A549 (cell line): ENCODE measurements at regions of chr6 and their contacts with region 1.

Region 1: GRCh38 chr6:3748208-3749066 is 3.1 kb downstream of the PXDC1 start:
- DNase-seq: peak; percentile 75 to 86
- ATAC-seq: peak; percentile 74 to 83
- H3K4me3 ChIP-seq: no peak overlapping the region
- H3K27ac ChIP-seq: peak overlapping the region; percentile 41 to 53; a peak in 2 of 6 replicates
- H3K4me1 ChIP-seq: peaks cover 39% of the 10 kb centered on the region
- CTCF ChIP-seq: peak; percentile 69
- EP300 ChIP-seq: no peak
- POLR2A ChIP-seq: no peak
- RAD21 ChIP-seq: peak; percentile 66 to 72

Region 2: GRCh38 chr6:3721810-3722626 is 26.4 kb before region 1 on chr6:
- CTCF ChIA-PET with region 1: no interaction called
- POLR2A ChIA-PET with region 1: no interaction called
- DNase-seq: no peak
- ATAC-seq: no peak
- H3K4me3 ChIP-seq: no peak overlapping the region
- H3K27ac ChIP-seq: no peak overlapping the region
- H3K4me1 ChIP-seq: no peaks in the 10 kb centered on the region
- CTCF ChIP-seq: no peak
- EP300 ChIP-seq: no peak
- POLR2A ChIP-seq: no peak
- RAD21 ChIP-seq: no peak

Region 3: DNA sequence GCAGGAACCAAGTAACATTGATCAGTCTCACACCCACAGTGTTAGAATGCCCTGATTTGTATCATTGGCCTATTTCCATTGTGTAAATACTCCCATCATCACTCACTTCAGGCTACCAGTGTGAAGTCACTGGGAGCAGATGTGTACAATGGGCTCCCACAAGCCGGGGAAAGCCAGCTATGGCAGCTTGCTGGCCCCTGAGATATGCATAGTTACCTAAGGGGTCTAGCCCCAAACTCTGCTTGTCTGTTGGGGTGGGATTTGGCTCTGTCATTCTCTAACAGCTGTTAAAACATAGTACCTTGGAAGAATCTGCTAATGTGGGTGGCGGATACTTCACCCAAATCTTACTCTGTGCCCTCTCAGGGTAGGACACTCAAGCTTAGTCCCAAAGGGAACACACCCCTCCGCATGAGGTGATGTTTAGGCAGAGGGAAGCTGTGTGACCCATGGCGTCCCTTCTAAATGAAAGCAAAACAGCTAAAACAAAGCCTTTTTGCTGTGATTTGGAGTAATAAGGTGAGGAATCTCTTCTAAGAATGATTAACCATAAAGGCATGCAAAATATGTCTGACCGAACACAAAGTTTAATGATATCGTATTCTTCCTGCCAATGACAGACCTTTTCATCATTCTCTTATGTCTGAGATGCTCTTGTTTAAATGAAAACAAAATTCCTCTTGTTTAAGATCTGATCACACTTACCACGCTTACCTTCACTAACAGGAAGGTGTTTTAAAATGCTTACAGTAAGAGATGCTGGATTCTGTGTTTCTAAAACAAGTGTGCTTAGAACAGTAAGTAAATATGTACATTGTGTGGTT is 49.0 kb after region 1 on chr6:
- CTCF ChIA-PET with region 1: interaction called, 18 read pairs
- POLR2A ChIA-PET with region 1: no interaction called
- DNase-seq: peak; percentile 34 to 55
- ATAC-seq: peak; percentile 65 to 85; a peak in 4 of 6 replicates
- H3K4me3 ChIP-seq: no peak overlapping the region
- H3K27ac ChIP-seq: peak overlapping the region; percentile 74 to 90
- H3K4me1 ChIP-seq: peaks cover 33% of the 10 kb centered on the region
- CTCF ChIP-seq: no peak
- EP300 ChIP-seq: no peak
- POLR2A ChIP-seq: no peak
- RAD21 ChIP-seq: no peak

Region 4: DNA sequence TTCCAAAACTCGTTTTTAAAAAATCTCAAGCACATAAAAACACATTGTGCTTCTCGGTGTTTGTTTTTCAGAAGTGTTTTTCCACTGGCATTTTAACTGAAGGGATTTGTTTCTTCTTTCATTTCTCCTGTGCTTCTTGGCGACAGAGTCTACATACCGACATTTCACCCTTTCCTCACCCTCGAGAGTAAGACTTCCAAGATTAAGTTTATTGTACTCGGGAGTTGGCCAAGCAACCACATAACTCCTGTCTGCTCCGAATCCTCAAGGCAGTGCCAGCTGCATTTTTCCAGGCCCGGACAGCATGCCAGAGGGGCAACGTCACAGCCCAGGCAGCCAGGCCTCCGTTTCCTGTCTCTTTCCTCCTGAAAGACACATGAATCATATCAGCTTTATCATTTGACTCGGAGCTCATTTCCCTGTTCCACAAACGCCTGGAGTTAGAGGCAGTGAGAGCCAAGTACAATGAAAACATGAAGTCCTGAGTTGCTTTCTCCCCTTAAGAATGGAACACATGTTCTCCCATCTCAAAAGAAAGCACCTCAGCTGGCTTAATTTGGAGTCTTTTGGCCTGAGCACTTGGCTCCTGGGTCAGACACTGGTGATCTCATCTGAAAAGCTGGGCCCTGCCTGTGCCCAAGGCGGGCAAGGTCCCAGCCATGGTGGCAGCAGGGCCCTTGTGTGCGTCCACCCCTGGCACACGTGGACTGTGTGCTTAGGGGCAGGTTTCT is 77.6 kb after region 1 on chr6:
- CTCF ChIA-PET with region 1: interaction called, 10 read pairs
- POLR2A ChIA-PET with region 1: no interaction called
- DNase-seq: peak; percentile 62 to 86
- ATAC-seq: peak; percentile 98 to 99
- H3K4me3 ChIP-seq: no peak overlapping the region
- H3K27ac ChIP-seq: peak overlapping the region; percentile 83 to 95
- H3K4me1 ChIP-seq: peaks cover 22% of the 10 kb centered on the region
- CTCF ChIP-seq: no peak
- EP300 ChIP-seq: no peak; a peak in 1 of 5 replicates
- POLR2A ChIP-seq: no peak
- RAD21 ChIP-seq: no peak

Region 5: DNA sequence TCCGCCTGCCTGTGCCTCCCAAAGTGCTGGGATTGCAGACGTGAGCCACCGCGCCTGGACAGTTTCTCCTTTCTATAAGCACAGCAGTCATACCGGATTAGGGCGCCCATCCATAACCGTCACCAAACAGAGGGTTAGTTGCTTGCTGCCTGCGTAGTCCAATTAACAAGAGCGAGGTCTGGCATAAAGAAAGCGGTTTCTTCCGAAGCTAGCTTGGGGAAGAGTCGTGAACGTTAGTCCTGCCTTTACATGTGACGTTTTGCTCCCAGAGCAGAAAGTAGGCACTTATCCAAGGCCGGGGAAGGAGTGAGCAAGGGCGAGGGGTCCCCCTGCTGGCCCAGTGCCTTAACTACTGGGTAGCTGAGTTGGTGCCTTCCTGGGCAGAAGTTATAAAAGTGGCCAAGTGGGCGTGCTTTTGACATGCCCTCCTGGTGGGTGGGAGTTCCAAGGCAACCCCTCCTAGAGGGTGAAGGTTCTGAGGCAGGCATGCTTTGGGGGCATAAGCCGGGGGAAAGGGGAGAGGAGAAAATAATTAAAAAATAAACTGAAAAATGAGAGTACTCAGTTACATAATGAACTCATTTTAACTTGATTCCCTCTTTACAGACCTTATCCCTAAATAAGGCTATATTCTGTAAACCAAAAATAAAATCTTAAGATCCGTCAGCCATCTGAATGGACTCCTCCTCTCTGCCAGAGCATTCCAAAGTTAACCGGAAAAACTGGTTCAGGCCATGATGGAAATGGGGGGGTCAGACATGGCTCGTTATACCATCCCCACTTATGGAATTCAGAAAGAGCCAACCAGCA is 242.5 kb after region 1 on chr6:
- CTCF ChIA-PET with region 1: interaction called, 22 read pairs
- POLR2A ChIA-PET with region 1: no interaction called
- DNase-seq: peak; percentile 55 to 80
- ATAC-seq: peak; percentile 97 to 98
- H3K4me3 ChIP-seq: no peak overlapping the region
- H3K27ac ChIP-seq: peak overlapping the region; percentile 34 to 69; a peak in 4 of 6 replicates
- H3K4me1 ChIP-seq: peaks cover 19% of the 10 kb centered on the region; the same call in 2 of the 3 replicates
- CTCF ChIP-seq: peak; percentile 65
- EP300 ChIP-seq: no peak
- POLR2A ChIP-seq: no peak
- RAD21 ChIP-seq: peak; percentile 84 to 90

Region 6: DNA sequence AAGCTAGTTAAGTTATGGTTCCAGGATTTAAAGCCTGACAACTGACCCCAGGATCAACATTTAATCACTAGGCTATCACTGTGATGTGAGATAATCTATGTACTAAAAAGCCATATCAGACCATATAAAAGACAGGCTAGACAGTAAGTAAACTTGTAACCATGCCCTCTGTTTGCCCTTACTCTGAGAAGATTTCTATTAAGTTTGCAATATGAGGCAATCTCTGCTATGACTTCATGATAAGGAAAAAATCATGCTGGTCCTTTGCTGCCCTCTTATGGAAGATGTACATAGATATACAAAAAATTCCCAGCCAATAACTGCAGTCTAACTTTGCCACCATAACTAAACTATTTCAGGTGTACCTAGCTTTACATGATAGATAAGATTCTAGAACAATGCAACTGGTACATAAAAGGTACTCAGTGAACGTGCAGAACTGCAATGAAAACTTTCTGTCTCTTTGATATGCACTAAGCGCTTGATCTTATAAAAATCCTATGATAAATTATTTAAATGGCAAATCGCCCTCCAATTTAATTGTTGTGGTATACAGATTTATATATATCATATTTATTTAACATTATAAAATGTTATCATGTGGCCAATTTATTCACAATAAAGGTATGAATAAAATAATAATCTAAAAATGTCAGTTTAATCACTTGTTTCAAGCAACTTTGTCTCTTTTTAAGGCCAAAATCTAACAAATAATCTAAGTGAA is 260.0 kb after region 1 on chr6:
- CTCF ChIA-PET with region 1: interaction called, 24 read pairs
- POLR2A ChIA-PET with region 1: no interaction called
- DNase-seq: peak; percentile 43 to 85
- ATAC-seq: peak; percentile 87
- H3K4me3 ChIP-seq: no peak overlapping the region
- H3K27ac ChIP-seq: peak overlapping the region; percentile 67 to 83
- H3K4me1 ChIP-seq: peaks cover 39% of the 10 kb centered on the region
- CTCF ChIP-seq: peak; percentile 63
- EP300 ChIP-seq: 0 out of 5 replicates have a peak, but pooled peaks of 1 of the 2 experiments have one; percentile 36
- POLR2A ChIP-seq: no peak
- RAD21 ChIP-seq: peak; percentile 69 to 74